WTC11 (cell line): ENCODE measurements at regions of chr5 and their contacts with region 1.

Region 1: GRCh38 chr5:139872052-139872766 is 76.6 kb downstream of the PSD2 start:
- DNase-seq: peak; percentile 45
- ATAC-seq: peak; percentile 73
- H3K4me3 Mint-ChIP-seq: no peak overlapping the region
- H3K27ac Mint-ChIP-seq: no peak overlapping the region
- H3K4me1 Mint-ChIP-seq: peaks cover 19% of the 10 kb centered on the region
- H3K27me3 Mint-ChIP-seq: no peaks in the 10 kb centered on the region; the same call in 1 of the 2 replicates
- CTCF ChIP-seq: 0 out of 2 replicates have a peak, but pooled peaks have one; percentile 24

Region 2: GRCh38 chr5:139745800-139746690 is 126.2 kb before region 1 on chr5:
- CTCF ChIA-PET with region 1: no interaction called
- POLR2A ChIA-PET with region 1: no interaction called
- DNase-seq: peak; percentile 88
- ATAC-seq: peak; percentile 72
- H3K4me3 Mint-ChIP-seq: peak overlapping the region; percentile 77
- H3K27ac Mint-ChIP-seq: peak overlapping the region; percentile 93; the same call in 1 of the 2 replicates
- H3K4me1 Mint-ChIP-seq: peaks cover 52% of the 10 kb centered on the region
- H3K27me3 Mint-ChIP-seq: peaks cover 64% of the 10 kb centered on the region
- CTCF ChIP-seq: no peak

Region 3: DNA sequence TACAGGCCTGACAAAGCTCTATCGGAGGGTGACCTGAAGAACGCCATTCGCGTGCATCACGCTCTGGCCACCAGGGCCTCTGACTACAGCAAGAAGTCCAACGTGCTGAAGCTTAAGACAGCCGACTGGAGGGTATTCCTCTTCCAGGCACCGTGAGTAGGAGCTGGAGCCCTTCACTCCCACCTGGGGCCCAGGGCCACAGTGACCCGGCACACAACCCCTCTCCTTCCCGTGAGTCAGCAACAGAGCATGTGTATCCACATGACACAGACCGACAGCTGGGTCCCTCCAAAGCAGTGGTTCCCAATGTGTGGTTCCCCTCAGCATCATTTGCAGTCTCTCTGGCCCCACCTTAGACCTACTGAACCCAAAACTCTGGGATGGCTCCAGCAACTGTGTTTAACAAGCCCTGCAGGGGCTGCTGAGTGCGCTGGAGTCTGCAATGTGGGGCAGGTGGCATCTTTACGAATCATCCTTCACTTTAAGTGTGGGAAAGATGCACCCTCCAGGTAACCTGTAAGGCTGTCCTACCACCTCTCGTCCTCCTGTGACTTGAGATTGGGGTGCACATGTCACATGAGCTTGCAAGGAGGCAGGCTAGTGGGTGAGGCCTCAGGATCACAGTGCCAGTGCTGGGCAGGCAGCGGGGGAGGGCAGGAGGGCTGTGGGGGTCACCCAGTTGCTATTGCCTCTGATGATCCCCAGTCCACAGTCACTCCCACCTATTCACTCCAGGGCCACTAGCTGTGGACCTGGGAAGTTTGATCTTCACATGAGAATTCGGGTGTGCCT is 34.4 kb before region 1 on chr5:
- CTCF ChIA-PET with region 1: no interaction called
- POLR2A ChIA-PET with region 1: no interaction called
- DNase-seq: no peak
- ATAC-seq: no peak
- H3K4me3 Mint-ChIP-seq: no peak overlapping the region
- H3K27ac Mint-ChIP-seq: no peak overlapping the region
- H3K4me1 Mint-ChIP-seq: no peaks in the 10 kb centered on the region
- H3K27me3 Mint-ChIP-seq: peaks cover 17% of the 10 kb centered on the region
- CTCF ChIP-seq: no peak

Region 4: GRCh38 chr5:139882961-139883539 is 10.8 kb after region 1 on chr5:
- CTCF ChIA-PET with region 1: interaction called, 16 read pairs
- POLR2A ChIA-PET with region 1: no interaction called
- DNase-seq: no peak
- ATAC-seq: no peak
- H3K4me3 Mint-ChIP-seq: no peak overlapping the region
- H3K27ac Mint-ChIP-seq: no peak overlapping the region
- H3K4me1 Mint-ChIP-seq: peaks cover 10% of the 10 kb centered on the region
- H3K27me3 Mint-ChIP-seq: peaks cover 2% of the 10 kb centered on the region; the same call in 1 of the 2 replicates
- CTCF ChIP-seq: no peak

Region 5: GRCh38 chr5:139888370-139888769 is 16.2 kb after region 1 on chr5:
- CTCF ChIA-PET with region 1: interaction called, 10 read pairs
- POLR2A ChIA-PET with region 1: no interaction called
- DNase-seq: no peak
- ATAC-seq: peak; percentile 52
- H3K4me3 Mint-ChIP-seq: no peak overlapping the region
- H3K27ac Mint-ChIP-seq: no peak overlapping the region
- H3K4me1 Mint-ChIP-seq: no peaks in the 10 kb centered on the region
- H3K27me3 Mint-ChIP-seq: peaks cover 2% of the 10 kb centered on the region; the same call in 1 of the 2 replicates
- CTCF ChIP-seq: no peak